RWPE1 (cell line): ENCODE measurements at regions of chr17 and their contacts with region 1.

Region 1: GRCh38 chr17:35679007-35679682 is 52.3 kb upstream of the RASL10B start:
- DNase-seq: no peak
- H3K27ac ChIP-seq: no peak overlapping the region
- CTCF ChIP-seq: no peak

Region 2: DNA sequence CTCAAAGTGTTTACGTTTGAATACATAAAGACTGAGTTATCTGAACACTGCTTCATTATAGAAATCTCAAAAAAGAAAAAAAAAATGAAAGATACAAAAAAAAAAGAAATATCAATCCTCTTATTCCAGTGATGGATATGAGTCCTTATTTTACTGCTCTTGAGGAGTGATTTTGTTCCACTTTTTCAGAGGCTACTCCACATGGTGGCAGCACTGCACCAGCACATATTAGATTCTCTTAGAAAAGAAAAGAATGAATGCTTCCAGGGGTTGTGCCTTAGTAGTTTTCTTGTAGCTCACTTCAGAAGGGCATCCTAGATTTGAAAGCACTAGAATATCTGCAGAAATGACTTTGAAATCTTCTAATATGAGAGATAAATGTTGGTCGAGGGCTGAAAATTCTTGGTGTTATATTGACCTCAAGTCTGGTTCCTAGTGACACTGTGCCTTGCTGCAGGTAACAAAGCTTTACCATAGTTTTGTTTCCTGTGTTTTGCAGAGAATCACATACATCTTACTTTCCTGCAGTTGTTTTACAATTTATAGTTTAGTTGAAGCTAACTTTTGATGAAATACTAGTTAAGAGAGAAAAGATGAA is 66.1 kb before region 1 on chr17:
- CTCF ChIA-PET with region 1: interaction called, 11 read pairs
- POLR2A ChIA-PET with region 1: no interaction called
- DNase-seq: peak; percentile 13
- H3K27ac ChIP-seq: no peak overlapping the region
- CTCF ChIP-seq: peak; percentile 77